ENCODE measurements at regions of chr4 and their contacts with region 1.

Region 1: DNA sequence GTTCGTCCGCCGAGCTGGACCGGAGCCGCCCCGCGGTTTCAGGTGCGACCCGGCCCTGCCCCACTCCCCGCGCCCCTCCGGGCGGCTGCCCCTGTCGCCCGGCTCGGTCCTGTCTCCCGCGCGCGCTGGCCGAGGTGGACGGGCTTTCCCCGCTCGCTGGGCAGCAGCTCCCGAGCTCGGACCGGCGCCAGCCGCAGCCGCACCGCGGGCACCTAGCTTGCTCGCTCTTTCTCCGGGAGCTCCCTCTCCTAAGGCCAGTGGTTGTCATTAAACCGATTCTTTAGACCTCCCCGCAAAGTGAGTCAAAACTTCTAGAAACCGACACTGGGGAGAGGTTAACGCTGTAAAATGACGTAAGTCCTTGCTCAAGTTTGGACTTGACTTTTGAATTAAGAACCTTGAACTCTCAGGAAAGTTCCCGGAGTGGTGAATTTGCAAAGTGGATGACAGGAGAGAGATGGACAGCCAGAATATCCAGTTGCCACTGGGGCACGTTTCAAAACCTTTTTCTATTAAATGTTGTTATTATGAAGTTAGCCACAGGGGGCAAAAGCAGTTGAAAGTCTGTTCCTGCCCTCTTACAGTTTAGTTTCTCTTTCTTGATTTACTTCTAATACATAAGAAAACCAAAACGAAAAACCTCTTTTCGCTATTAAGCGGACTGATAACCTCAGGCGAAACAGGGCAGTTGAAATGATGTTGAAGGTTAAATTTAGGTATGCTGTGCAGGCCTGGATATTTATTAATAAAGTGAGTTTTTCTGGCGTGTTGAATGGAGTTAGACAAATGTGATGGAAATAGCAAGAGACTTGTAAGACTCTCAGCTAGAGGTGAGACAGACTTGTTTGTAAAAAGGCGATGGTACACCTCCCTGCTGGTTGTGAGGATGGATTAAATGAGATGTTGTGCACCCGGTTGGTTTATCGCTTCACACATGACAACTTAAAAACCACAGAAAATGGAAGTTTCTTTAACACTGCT is 847 bp downstream of the PI4K2B start:
- DNase-seq: peak; percentile 85
- H3K4me3 ChIP-seq: peak overlapping the region; percentile 96
- H3K27ac ChIP-seq: peak overlapping the region; percentile 88
- H3K4me1 ChIP-seq: peaks cover 43% of the 10 kb centered on the region
- CTCF ChIP-seq: peak; percentile 79

Region 2: DNA sequence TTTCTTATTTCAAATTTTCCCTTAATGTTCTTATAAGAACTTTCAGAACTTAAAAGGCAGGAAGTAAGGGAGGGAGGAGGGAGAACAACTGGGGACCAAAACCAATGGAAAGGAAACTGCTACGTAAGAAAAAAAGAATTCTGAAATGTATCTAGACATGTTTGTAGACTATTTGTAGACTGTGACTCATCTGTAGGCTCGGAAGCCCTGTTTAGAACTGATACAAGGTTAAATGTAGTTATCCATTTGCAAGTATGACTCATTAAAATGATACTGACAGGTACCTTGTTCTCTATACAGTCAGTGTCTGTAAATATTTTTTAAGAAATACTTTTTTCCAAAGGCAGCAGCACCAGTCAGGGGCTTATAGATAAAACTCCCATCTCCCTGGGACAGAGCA is 852.3 kb before region 1 on chr4:
- CTCF ChIA-PET with region 1: no interaction called
- POLR2A ChIA-PET with region 1: no interaction called
- intact Hi-C with region 1: no loop called
- DNase-seq: no peak
- H3K4me3 ChIP-seq: no peak overlapping the region
- H3K27ac ChIP-seq: no peak overlapping the region
- H3K4me1 ChIP-seq: no peaks in the 10 kb centered on the region
- CTCF ChIP-seq: no peak

Region 3: GRCh38 chr4:25376754-25377571 is 142.3 kb after region 1 on chr4 and contains the start of gene ANAPC4:
- CTCF ChIA-PET with region 1: no interaction called
- POLR2A ChIA-PET with region 1: no interaction called
- intact Hi-C with region 1: loop called (anchors 2 kb)
- DNase-seq: peak; percentile 96
- H3K4me3 ChIP-seq: peak within 1 kb of the TSS; percentile 100
- H3K27ac ChIP-seq: peak within 1 kb of the TSS; percentile 54
- H3K4me1 ChIP-seq: peaks cover 24% of the 10 kb centered on the region
- CTCF ChIP-seq: no peak
- total RNA-seq, gene ANAPC4: 32.7 and 36.1 TPM in 2 replicates